ENCODE measurements at regions of chr1 and their contacts with region 1.

Region 1: GRCh38 chr1:89987170-89987819 is 7.6 kb upstream of the ZNF326 start:
- DNase-seq: peak; percentile 90
- H3K4me3 Mint-ChIP-seq: no peak overlapping the region
- H3K27ac Mint-ChIP-seq: no peak overlapping the region
- H3K4me1 Mint-ChIP-seq: peaks cover 12% of the 10 kb centered on the region
- H3K27me3 Mint-ChIP-seq: peaks cover 11% of the 10 kb centered on the region

Region 2: GRCh38 chr1:89804642-89805237 is 182.6 kb before region 1 on chr1:
- intact Hi-C with region 1: loop called (anchors 1 kb)
- DNase-seq: peak; percentile 95
- H3K4me3 Mint-ChIP-seq: no peak overlapping the region
- H3K27ac Mint-ChIP-seq: no peak overlapping the region
- H3K4me1 Mint-ChIP-seq: peaks cover 8% of the 10 kb centered on the region
- H3K27me3 Mint-ChIP-seq: peaks cover 7% of the 10 kb centered on the region

Region 3: GRCh38 chr1:89908672-89909436 is 78.4 kb before region 1 on chr1:
- intact Hi-C with region 1: loop called (anchors 5 kb)
- DNase-seq: no peak
- H3K4me3 Mint-ChIP-seq: no peak overlapping the region
- H3K27ac Mint-ChIP-seq: peak overlapping the region; percentile 68
- H3K4me1 Mint-ChIP-seq: peaks cover 44% of the 10 kb centered on the region
- H3K27me3 Mint-ChIP-seq: no peaks in the 10 kb centered on the region

Region 4: DNA sequence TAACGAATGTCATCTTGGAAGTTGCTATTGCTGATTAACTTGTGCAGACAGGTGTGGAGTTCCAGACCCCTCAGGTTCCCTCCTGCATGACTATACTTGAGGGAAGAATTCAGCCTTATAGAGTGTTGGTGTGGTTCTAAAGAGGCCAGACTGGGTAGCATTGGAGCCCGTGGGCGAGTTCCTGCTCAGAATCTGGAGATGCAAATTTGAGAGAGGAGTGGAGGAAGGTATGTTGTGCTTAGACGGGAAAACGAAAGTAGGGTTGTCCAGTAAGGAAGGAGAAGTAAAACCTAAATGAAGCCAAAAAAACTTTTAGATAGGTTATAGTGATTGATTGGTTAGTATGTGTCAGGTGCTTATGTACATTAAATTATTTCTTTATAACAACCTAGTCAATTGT is 86.8 kb after region 1 on chr1:
- intact Hi-C with region 1: no loop called
- DNase-seq: no peak
- H3K4me3 Mint-ChIP-seq: no peak overlapping the region
- H3K27ac Mint-ChIP-seq: no peak overlapping the region
- H3K4me1 Mint-ChIP-seq: peaks cover 3% of the 10 kb centered on the region
- H3K27me3 Mint-ChIP-seq: peaks cover 16% of the 10 kb centered on the region

Measured in activated CD4-positive, alpha-beta T cell treated with anti-CD3 and anti-CD28 coated beads, Interleukin-2, amount 10 ng/mL, durations not matched to agents 24 days and 14 days (primary cell).